ENCODE measurements at regions of chr7 and their contacts with region 1.

Region 1: DNA sequence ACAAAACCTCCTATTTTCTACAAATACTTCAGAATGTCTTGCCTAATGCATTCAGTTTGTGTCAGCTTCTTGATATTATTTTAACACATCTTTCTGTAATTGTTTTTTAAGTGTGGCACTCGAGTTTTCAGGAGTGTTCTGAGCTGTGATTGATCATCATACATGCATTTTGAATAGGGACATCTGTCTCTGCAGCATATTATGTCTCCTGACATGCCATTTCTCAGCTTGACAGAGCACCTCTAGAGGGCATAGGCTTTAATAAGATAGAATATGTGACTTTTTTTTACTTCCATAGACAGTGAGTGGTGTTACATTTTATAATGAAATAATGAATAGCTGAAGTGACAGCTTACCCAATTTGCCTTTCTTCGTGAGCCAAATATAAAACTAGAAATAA is 219.2 kb upstream of the HDAC9 start:
- DNase-seq: no peak
- ATAC-seq: no peak

Region 2: DNA sequence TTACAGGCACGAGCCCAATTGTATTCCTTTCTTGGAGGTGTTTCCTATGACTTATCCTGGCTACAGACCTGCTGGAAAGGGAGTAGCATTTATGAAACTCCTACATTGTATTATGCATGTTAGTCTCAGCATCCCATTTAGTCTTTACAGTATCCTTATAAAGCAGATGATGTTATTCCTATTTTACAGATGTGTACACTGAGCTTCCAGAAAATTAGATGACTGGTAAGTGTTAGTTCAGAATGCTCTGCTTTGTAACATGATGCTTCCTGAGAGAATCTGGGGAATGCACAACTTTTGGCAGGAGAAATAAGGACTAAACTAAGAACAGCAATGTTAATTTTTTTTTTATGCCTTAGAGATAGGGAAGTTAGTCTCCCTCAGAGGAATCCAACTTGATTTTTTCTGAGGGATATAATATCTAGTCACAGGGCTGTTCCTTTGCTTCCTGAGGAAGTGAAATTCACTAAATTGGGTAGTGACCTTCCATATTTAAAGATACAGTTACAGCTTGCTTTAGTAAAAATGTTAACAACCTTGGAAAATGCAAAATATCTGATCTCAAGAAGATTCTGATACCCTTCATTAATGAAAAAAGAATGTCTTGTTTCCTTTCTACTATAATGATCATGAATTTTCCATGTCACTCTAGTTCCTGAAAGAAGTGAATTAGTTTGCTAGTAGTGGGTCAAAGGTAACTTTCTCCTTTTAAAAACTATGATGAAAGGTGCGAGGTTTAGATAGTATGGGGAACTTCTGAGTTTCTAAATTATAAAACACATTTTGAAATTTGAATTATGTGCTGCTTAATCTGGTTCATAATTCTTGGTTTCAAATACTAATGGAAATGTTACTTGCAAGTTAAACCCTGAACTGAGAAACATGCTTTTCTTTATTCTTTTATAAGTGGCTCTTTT is 54.7 kb before region 1 on chr7:
- intact Hi-C with region 1: no loop called
- DNase-seq: no peak
- ATAC-seq: no peak

Region 3: DNA sequence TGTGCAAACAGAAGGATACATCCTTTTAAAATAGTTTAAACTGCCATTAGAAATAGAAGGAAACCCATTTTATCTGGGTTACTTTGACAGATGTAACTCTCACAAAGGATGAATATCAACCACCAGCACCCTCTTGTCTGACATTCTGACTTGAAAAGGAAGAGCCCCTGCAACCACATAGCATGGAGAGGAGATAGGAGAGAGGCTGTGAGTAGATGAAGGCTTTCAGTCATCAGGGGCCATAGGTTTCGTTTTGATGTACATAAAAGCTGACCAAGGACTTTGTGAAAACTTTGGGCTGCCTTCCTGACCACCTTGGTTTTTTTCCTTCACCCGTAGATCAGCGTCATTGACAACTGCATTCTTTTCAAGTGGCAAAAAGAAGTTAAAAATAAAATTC is 37.2 kb before region 1 on chr7:
- intact Hi-C with region 1: loop called (anchors 5 kb)
- DNase-seq: no peak
- ATAC-seq: no peak

Region 4: GRCh38 chr7:18408461-18408860 is 132.1 kb after region 1 on chr7:
- intact Hi-C with region 1: no loop called
- DNase-seq: no peak
- ATAC-seq: no peak